RWPE1 (cell line): ENCODE measurements at regions of chr19 and their contacts with region 1.

Region 1: DNA sequence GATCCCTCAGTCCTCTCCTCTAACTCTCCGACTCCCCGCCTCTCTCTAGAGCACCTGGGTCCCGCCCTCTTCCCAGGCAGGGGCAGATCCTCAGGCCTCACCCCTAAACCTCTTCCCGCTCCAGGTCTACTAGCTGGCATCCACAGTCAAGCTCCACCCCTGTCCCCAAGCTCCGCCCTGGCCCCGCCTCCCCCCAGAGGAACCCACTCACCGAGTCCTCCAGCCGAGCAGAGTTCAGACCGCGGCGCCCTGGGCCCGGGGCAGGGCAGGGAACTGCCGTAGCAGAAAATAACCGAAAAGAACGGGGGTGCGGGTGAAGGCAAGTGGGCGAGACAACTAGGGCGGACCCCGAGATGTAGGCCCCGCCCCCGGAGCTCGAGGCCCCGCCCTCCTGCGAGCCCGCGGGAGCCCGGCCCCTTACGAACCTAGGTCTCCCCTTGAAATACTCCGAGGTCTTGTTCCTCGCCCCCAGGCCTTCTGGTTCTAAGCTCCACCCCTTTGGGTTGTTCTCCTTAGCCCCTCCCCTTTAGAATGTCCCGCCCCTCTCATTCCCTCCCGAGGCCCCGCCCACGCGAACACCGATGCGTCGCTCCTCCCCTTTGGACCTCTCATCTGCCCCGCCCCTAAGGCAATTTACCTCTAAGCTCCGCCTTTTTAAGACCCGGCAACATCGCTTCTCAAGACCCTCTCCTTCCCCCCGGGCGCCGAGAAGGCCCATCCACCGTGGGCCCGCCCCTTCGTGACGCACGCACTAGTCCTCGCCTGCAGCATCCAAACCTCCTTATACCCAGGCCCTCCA is at the start of gene GGN:
- DNase-seq: peak; percentile 98
- H3K27ac ChIP-seq: peak within 1 kb of the TSS; percentile 94
- CTCF ChIP-seq: no peak

Region 2: DNA sequence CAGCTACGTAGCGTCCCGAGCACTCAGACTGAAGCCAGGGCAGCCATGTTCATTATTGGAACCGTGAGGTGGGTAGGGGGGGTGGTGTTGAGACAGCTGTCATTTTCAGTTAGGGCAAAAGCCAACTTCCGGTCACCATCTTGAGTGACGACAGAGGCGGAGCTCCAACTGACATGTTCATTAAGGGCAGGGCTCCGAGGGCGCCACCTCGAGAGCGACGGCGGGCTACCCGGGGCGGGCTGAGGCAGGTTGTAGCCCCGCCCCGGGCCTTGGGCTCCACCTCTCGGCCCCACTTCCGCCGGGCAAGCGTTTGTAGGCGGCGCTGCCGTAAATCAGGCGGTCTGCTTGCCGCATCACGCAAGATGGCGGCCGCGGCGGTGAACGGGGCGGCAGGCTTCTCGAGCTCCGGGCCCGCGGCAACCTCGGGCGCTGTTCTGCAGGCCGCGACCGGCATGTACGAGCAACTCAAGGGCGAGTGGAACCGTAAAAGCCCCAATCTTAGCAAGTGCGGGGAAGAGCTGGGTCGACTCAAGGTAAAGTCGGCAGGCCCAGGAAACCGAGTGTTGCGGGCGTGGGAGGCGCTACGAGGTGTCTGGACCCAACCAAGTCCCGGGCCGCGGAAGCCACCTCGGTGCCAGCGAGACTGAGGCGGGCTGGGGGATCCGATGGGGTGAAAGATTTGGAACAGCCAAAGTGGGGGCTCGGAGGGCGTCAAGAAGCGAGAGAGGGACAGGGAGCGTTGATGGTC is 13.1 kb before region 1 on chr19 and contains the start of gene PSMD8:
- CTCF ChIA-PET with region 1: no interaction called
- POLR2A ChIA-PET with region 1: interaction called, 14 read pairs
- DNase-seq: peak; percentile 97
- H3K27ac ChIP-seq: peak within 1 kb of the TSS; percentile 88
- CTCF ChIP-seq: no peak